Heart right ventricle (tissue), 16 donors: ENCODE measurements at regions of chr11 and their contacts with region 1.

Region 1: DNA sequence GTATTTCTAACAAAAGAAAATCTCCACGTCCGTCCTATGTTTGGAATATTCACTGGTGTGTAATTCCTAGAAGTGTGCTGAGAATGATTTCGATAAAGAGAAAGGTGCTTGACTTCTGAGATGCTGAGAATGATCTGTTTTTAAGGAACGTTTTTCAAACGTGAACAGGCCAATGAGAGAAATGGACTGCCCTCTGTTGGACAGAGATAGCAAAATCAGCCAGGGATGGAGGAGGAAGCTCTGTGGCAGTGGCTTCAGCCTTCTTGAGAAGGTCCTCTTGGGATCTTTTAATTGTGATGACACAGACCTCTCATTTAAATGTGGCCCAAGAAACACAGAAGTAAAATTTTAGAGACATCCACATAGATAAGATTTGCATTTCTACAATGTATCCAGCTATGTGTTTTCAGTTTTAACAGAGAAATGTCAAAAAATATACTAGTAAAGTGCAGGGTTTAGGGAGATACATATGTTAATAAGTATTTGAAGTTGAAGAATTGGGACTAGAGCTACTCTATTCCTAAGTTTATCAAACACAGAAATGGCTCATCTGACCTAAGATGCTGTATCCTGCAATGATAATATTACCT is 84.0 kb upstream of the RCN1 start:
- DNase-seq: peak in 1 of 2 donors; percentile 6
- ATAC-seq: peak in 2 of 8 donors; percentile 39 to 44
- H3K4me3 ChIP-seq: no peak overlapping the region
- H3K27ac ChIP-seq: no peak overlapping the region
- H3K4me1 ChIP-seq: no peaks in the 10 kb centered on the region
- H3K27me3 ChIP-seq: peaks cover 0 to 85% (median 64%) of the 10 kb centered on the region in 7 donors
- CTCF ChIP-seq: peak; percentile 19 to 72 (median 65)

Region 2: DNA sequence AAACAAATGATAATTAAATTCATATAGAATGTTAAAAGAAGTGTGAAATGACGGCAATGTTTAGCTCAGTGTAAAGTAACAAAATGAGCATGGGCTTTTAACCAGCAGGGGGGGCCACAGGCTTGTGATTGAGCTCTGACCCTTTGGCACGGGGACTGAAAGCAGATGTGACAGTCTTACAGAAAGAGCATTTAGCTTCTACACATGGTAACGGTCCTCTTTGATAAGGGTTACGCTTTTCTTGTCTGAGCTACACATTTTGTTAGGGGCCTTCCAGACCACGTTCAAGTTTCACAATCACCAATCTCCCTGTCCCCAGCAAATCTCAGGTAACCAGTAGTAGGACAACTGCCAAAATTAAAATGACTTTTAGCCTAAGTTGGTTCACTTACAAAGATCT is 899.8 kb before region 1 on chr11:
- intact Hi-C with region 1: loop called in 1 of 10 experiments (anchors 5 kb)
- DNase-seq: peak; percentile 24 to 49
- ATAC-seq: peak in 5 of 8 donors; percentile 38 to 69 (median 67)
- H3K4me3 ChIP-seq: no peak overlapping the region
- H3K27ac ChIP-seq: no peak overlapping the region
- H3K4me1 ChIP-seq: no peaks in the 10 kb centered on the region
- H3K27me3 ChIP-seq: peaks cover 0 to 4% (median 0%) of the 10 kb centered on the region in 7 donors
- CTCF ChIP-seq: peak; percentile 12 to 77 (median 72)

Region 3: DNA sequence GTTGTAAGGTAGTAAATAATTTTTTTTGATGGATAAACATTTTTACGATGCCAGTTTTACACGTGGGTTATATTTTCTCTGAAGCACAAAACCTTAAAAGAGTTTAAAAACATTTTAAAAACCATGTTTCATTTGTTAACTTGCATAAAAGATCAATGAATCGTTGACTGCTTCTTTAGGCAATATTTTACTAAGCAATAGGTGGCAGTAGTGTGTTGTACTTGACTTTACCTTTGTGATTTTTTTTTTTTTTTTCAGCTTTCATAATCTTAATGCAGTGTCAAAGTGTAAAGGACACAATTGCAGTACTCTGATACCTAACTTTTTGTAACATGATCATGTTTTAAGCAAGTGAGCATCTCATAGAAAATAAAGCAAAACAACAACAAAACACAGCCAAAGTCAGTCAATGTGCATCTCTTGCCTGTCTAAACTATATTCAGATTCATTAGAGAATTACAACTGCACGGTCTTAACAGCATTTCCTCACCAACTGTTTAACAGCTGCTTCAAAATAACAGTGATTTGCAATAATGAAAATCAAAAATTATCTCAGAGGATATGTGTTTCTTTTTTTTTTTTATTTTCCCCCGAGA is 609.6 kb before region 1 on chr11:
- intact Hi-C with region 1: loop called in 1 of 10 experiments (anchors 10 kb)
- DNase-seq: no peak
- ATAC-seq: no peak
- H3K4me3 ChIP-seq: no peak overlapping the region
- H3K27ac ChIP-seq: no peak overlapping the region
- H3K4me1 ChIP-seq: no peaks in the 10 kb centered on the region
- H3K27me3 ChIP-seq: no peaks in the 10 kb centered on the region
- CTCF ChIP-seq: peak; percentile 17 to 73 (median 58)

Region 4: GRCh38 chr11:31798554-31799434 is 208.1 kb before region 1 on chr11:
- intact Hi-C with region 1: no loop called
- DNase-seq: no peak
- ATAC-seq: peak in 6 of 8 donors; percentile 16 to 53 (median 34)
- H3K4me3 ChIP-seq: peak overlapping the region in 1 of 10 donors; percentile 2
- H3K27ac ChIP-seq: no peak overlapping the region
- H3K4me1 ChIP-seq: peaks cover 0 to 33% (median 21%) of the 10 kb centered on the region in 9 donors
- H3K27me3 ChIP-seq: peaks cover 55 to 96% (median 89%) of the 10 kb centered on the region in 7 donors
- CTCF ChIP-seq: peak in 5 of 9 donors; percentile 6 to 33 (median 21)

Region 5: GRCh38 chr11:31968461-31969358 is 38.2 kb before region 1 on chr11:
- intact Hi-C with region 1: no loop called
- DNase-seq: peak in 1 of 2 donors; percentile 29
- ATAC-seq: peak in 7 of 8 donors; percentile 43 to 92 (median 83)
- H3K4me3 ChIP-seq: peak overlapping the region in 1 of 10 donors; percentile 7
- H3K27ac ChIP-seq: no peak overlapping the region
- H3K4me1 ChIP-seq: peaks cover 0 to 24% (median 5%) of the 10 kb centered on the region in 9 donors
- H3K27me3 ChIP-seq: peaks cover 0 to 15% (median 0%) of the 10 kb centered on the region in 7 donors
- CTCF ChIP-seq: no peak